Lower lobe of right lung (tissue), 2 donors: ENCODE measurements at regions of chr19 and their contacts with region 1.

Region 1: DNA sequence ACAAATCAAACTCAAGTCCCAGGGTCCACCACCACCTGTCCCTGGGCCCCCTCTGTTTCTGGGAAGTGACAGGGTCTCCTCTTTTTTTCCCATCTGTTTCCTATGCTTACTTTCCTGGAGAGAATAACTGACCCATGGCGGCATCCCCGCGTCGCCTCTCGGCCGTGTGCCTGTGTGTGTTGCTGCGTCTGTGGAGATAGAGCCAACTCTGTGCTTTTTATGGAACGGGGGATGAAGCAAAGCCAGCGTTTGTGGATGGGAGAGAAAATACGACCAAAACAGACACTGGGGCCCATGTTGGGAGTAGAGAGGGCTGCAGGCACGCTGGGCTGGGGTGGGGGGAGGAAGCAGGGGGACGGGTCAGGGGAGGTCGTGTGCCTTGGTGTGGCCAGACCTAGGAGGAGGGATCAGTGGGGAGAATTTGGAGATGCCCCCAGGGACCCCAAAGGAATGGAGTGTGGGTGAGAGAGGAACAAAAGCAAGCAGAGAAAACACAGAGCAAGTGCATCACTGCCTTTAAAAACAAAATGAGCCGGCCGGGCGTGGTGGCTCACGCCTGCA is 16.6 kb downstream of the PLK5 start:
- DNase-seq: no peak
- ATAC-seq: no peak
- H3K4me3 ChIP-seq: no peak overlapping the region
- H3K27ac ChIP-seq: no peak overlapping the region
- H3K4me1 ChIP-seq: no peaks in the 10 kb centered on the region
- H3K27me3 ChIP-seq: peaks cover 42% of the 10 kb centered on the region
- CTCF ChIP-seq: no peak

Region 2: DNA sequence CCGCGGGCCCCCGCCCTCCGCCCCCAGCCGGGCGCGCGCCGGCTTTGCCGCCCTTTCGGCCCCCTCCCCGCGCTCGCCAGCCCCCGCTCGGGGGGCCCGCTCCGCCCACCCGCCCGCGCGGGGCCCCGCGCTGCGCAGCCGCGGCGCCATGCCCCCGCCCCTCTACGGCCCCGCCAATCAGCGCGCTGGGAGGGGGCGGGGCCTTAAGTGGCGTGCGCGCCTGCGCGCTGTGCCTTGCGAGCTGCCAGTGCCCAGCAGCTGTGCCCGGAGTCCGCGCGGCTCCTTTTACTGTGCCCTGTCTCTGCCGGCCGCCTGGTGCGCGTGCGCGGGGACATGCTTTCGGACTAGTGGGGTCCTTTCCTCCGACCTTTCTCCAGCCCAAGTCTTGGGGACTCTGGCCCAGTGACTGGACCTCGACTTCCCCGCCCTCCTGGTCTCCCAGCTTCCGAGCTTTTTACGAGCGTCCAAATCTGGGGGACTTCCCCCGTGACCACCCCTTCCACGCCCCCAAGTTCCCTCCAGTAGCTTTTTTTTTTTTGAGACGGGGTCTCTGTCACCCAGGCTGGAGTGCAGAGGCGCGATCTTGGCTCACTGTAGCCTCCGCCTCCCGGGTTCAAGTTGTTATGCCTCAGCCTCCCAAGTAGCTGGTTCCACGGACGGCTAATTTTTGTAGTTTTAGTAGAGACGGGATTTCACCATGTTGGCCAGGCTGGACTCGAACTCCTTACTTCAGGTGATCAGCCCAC is 52.5 kb after region 1 on chr19 and contains the start of gene MBD3:
- intact Hi-C with region 1: no loop called
- DNase-seq: peak; percentile 96
- ATAC-seq: peak; percentile 96 to 97
- H3K4me3 ChIP-seq: peak within 1 kb of the TSS; percentile 84
- H3K27ac ChIP-seq: peak within 1 kb of the TSS; percentile 93
- H3K4me1 ChIP-seq: peaks cover 21% of the 10 kb centered on the region
- H3K27me3 ChIP-seq: no peaks in the 10 kb centered on the region
- CTCF ChIP-seq: no peak
- total RNA-seq, gene MBD3: 68.1 TPM

Region 3: GRCh38 chr19:1605236-1606137 is 65.0 kb after region 1 on chr19 and contains the start of gene UQCR11:
- intact Hi-C with region 1: no loop called
- DNase-seq: peak; percentile 96
- ATAC-seq: peak; percentile 94 to 97
- H3K4me3 ChIP-seq: peak within 1 kb of the TSS; percentile 100
- H3K27ac ChIP-seq: peak within 1 kb of the TSS; percentile 89
- H3K4me1 ChIP-seq: peaks cover 53% of the 10 kb centered on the region
- H3K27me3 ChIP-seq: no peaks in the 10 kb centered on the region
- CTCF ChIP-seq: peak; percentile 60
- total RNA-seq, gene UQCR11: 164 TPM

Region 4: DNA sequence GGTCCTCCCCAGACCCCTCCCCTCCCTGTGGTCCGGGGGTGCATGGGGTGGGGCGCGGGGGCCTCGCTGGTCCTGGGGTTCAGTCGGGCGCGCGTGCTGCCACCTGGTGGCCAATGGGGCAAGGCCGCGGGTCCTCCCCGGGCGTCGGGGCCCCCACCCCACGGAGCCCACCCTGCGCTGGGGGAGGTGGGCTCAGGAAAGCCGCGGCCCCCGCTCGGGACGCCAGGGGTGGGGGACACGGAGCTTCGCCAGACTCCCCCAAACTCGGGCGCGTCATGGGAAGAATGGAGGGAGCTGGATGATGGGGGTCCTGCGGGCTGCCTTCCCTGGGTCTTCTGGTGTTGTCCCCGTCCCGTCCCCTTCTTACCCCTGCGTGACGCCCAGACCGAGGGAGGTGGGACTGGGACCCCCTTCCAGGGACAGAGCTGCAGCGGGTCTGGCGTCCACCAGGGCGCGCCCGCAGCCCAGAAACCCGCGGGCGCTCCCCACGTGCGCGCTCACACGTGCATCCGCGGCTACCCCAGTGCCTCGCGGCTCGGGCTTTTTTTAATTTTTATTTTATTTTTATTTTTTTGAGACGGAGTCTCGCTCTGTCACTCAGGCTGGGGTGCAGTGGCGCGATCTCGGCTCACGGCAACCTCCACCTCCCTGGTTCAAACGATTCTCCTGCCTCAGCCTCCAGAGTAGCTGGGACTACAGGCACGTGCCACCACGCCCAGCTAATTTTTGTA is 131.8 kb after region 1 on chr19:
- intact Hi-C with region 1: loop called (anchors 10 kb)
- DNase-seq: peak; percentile 65
- ATAC-seq: peak; percentile 56 to 74
- H3K4me3 ChIP-seq: peak overlapping the region; percentile 14
- H3K27ac ChIP-seq: no peak overlapping the region
- H3K4me1 ChIP-seq: peaks cover 15% of the 10 kb centered on the region
- H3K27me3 ChIP-seq: peaks cover 89% of the 10 kb centered on the region
- CTCF ChIP-seq: peak; percentile 78